Activated T-helper 2 cell treated with anti-CD3 and anti-CD28 coated beads, Interferon-gamma antibody, Interleukin-2, Interleukin-4, amounts not matched to agents 10 μg/mL and 5 μg/mL and 100 μg/mL, durations not matched to agents 14 hours and 24 hours and 36 hours (primary cell): ENCODE measurements at regions of chr12 and their contacts with region 1.

Region 1: DNA sequence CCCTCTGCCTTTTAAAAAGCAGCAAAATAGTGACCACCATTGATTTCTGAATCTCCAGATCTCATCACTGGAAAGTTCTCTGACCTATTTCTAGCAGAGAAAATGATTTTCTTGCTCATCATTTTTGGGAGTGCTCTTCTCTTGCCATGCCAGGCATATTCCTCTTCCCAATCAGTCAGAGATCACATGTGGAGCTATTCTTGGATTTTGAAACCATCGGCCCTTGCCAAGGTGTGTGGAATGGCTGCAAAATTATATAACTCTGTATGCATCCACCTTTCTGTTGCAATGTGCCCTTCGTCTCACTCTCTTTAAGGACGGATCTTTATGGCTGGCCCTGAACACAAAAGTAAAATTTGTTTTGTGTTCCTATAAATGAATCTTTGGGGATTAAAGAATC is 25.5 kb upstream of the LDHB start:
- DNase-seq: no peak
- H3K4me3 Mint-ChIP-seq: no peak overlapping the region
- H3K27ac Mint-ChIP-seq: no peak overlapping the region
- H3K4me1 Mint-ChIP-seq: peaks cover 14% of the 10 kb centered on the region
- H3K27me3 Mint-ChIP-seq: peaks cover 19% of the 10 kb centered on the region

Region 2: GRCh38 chr12:21234395-21234794 is 448.7 kb before region 1 on chr12:
- intact Hi-C with region 1: no loop called
- DNase-seq: no peak
- H3K4me3 Mint-ChIP-seq: no peak overlapping the region
- H3K27ac Mint-ChIP-seq: no peak overlapping the region
- H3K4me1 Mint-ChIP-seq: no peaks in the 10 kb centered on the region
- H3K27me3 Mint-ChIP-seq: no peaks in the 10 kb centered on the region

Region 3: GRCh38 chr12:21296751-21297406 is 386.2 kb before region 1 on chr12:
- intact Hi-C with region 1: loop called (anchors 5 kb)
- DNase-seq: no peak
- H3K4me3 Mint-ChIP-seq: no peak overlapping the region
- H3K27ac Mint-ChIP-seq: no peak overlapping the region
- H3K4me1 Mint-ChIP-seq: peaks cover 8% of the 10 kb centered on the region
- H3K27me3 Mint-ChIP-seq: peaks cover 13% of the 10 kb centered on the region

Region 4: DNA sequence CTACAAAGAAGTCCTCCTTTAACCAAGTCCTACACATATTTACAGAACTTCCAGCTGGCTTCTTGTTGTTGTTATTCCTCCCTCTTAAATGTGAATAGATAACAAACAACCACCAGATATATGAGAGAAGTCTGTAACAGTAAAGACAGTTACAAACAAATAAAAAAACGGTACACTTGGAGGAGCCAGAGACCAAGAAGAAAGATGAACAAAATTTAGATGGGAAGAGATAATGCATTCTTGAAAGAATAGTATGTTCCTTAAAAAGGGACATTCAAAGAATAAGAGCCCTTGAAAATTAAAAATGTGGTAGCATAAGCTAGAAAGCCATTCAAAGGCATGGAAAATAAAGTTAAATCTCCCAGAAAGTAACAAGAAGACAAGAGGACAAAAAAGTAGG is 374.3 kb before region 1 on chr12:
- intact Hi-C with region 1: loop called (anchors 5 kb)
- DNase-seq: no peak
- H3K4me3 Mint-ChIP-seq: no peak overlapping the region
- H3K27ac Mint-ChIP-seq: no peak overlapping the region
- H3K4me1 Mint-ChIP-seq: no peaks in the 10 kb centered on the region
- H3K27me3 Mint-ChIP-seq: peaks cover 11% of the 10 kb centered on the region

Region 5: DNA sequence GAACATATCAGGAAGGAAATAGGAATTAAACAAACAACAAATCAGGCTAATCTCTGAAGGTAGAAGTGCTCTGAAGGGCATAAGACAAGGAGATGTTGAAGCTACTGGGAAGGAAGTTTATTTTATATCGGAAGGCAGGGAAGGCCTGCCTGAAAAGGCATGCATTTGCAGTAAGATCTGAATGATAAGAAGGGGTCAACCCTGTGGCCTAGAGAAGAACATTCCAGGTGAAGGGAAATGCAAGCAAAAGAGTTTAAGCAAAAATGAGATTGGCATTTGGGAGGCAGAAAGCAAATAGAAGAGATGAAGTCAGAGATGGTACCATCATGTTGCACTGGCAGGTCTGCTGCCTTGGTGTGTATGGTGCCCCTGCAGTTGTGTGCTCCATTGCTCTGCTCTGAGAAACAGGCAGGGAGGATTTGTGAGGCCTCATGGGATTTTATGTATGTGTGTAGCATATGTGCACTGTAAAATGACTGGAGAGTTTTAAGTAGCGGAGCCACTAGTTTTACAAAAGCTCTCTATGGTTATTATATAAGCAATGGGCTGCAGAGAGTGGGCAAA is 32.2 kb before region 1 on chr12:
- intact Hi-C with region 1: no loop called
- DNase-seq: no peak
- H3K4me3 Mint-ChIP-seq: no peak overlapping the region
- H3K27ac Mint-ChIP-seq: peak overlapping the region; percentile 24
- H3K4me1 Mint-ChIP-seq: peaks cover 72% of the 10 kb centered on the region
- H3K27me3 Mint-ChIP-seq: no peaks in the 10 kb centered on the region